ENCODE measurements at regions of chr5 and their contacts with region 1.

Region 1: DNA sequence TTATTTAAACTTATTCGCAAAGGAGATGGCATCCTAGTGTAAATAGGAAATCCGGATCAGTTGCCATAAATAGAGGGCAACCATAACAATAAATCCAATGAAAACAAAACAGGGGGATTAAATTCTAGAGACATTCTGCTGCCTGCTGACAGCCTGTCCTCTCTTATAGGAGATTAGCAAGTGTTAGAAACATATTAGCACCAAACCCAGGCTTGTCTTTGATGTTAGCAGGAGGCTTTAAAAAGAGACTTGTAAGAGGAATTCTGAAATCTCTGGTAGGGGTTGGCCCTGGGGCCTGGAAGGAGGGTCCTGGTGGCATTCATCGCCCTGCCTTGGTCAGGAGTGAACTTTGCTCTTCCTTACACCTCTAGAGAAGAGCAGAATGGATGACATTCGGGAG is 21.6 kb downstream of the NDST1 start:
- DNase-seq: no peak
- ATAC-seq: no peak
- H3K4me3 Mint-ChIP-seq: no peak overlapping the region
- H3K27ac Mint-ChIP-seq: no peak overlapping the region; the same call in 1 of the 2 replicates
- H3K4me1 Mint-ChIP-seq: peaks cover 34% of the 10 kb centered on the region
- H3K27me3 Mint-ChIP-seq: no peaks in the 10 kb centered on the region
- CTCF ChIP-seq: no peak

Region 2: GRCh38 chr5:150517272-150518152 is 12.0 kb before region 1 on chr5:
- CTCF ChIA-PET with region 1: interaction called, 22 read pairs
- POLR2A ChIA-PET with region 1: interaction called, 11 read pairs
- DNase-seq: no peak
- ATAC-seq: no peak; the same call in 1 of the 2 replicates
- H3K4me3 Mint-ChIP-seq: no peak overlapping the region
- H3K27ac Mint-ChIP-seq: peak overlapping the region; percentile 78; the same call in 1 of the 2 replicates
- H3K4me1 Mint-ChIP-seq: peaks cover 29% of the 10 kb centered on the region
- H3K27me3 Mint-ChIP-seq: no peaks in the 10 kb centered on the region
- CTCF ChIP-seq: no peak

Measured in WTC11 (cell line).